Motor neuron (in vitro differentiated cells): ENCODE measurements at regions of chr5 and their contacts with region 1.

Region 1: GRCh38 chr5:73591102-73591695 is 25.7 kb downstream of the UTP15 start:
- ATAC-seq: peak in 6 of 8 experiments; percentile 47 to 84 (median 63)
- H3K4me3 ChIP-seq: no peak overlapping the region
- H3K27ac ChIP-seq: no peak overlapping the region
- H3K4me1 ChIP-seq: no peaks in the 10 kb centered on the region

Region 2: GRCh38 chr5:73464016-73464745 is 127.0 kb before region 1 on chr5:
- in situ Hi-C with region 1: no loop called
- ATAC-seq: peak in 3 of 8 experiments; percentile 51 to 81 (median 76)
- H3K4me3 ChIP-seq: no peak overlapping the region
- H3K27ac ChIP-seq: no peak overlapping the region
- H3K4me1 ChIP-seq: no peaks in the 10 kb centered on the region

Region 3: GRCh38 chr5:73902327-73903051 is 311.3 kb after region 1 on chr5:
- in situ Hi-C with region 1: no loop called
- ATAC-seq: peak in 5 of 8 experiments; percentile 23 to 55 (median 30)
- H3K4me3 ChIP-seq: no peak overlapping the region
- H3K27ac ChIP-seq: no peak overlapping the region
- H3K4me1 ChIP-seq: no peaks in the 10 kb centered on the region

Region 4: GRCh38 chr5:74673011-74673790 is 1082.0 kb after region 1 on chr5:
- in situ Hi-C with region 1: loop called in 3 of 9 experiments (anchors 25 kb)
- ATAC-seq: peak in 3 of 8 experiments; percentile 68 to 78 (median 71)
- H3K4me3 ChIP-seq: no peak overlapping the region
- H3K27ac ChIP-seq: no peak overlapping the region
- H3K4me1 ChIP-seq: peaks cover 13 to 23% of the 10 kb centered on the region in 2 donors